Caco-2 (cell line): ENCODE measurements at regions of chr12 and their contacts with region 1.

Region 1: DNA sequence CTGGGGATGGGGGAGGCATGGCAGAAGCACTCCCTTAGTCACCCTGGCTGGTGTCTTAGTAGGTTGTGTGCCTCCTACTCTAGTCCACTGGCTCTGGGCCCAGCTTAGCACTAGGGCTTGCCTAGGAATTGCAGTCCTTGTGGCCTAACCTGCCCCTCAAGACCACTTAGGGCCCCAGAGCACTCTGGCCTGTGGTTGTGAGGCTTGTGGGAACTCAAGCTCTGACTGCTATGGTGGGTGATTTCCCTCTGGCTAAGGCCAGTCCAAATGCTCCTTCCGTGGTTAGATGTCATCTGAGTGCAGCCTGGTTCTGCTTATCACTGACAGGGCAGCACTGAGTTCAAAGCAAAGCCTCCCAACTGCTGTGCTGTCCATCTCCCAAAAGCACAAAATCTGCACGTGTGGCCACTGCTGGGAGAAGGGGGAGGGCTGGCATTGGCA is 20.2 kb downstream of the FGD4 start:
- DNase-seq: no peak
- H3K4me3 ChIP-seq: no peak overlapping the region
- H3K4me3 Mint-ChIP-seq: no peak overlapping the region
- H3K27ac Mint-ChIP-seq: peak overlapping the region; percentile 58
- H3K4me1 ChIP-seq: peaks cover 15% of the 10 kb centered on the region; the same call in 1 of the 2 replicates
- H3K4me1 Mint-ChIP-seq: peaks cover 27% of the 10 kb centered on the region
- H3K27me3 ChIP-seq: no peaks in the 10 kb centered on the region
- H3K27me3 Mint-ChIP-seq: no peaks in the 10 kb centered on the region
- CTCF ChIP-seq: no peak

Region 2: DNA sequence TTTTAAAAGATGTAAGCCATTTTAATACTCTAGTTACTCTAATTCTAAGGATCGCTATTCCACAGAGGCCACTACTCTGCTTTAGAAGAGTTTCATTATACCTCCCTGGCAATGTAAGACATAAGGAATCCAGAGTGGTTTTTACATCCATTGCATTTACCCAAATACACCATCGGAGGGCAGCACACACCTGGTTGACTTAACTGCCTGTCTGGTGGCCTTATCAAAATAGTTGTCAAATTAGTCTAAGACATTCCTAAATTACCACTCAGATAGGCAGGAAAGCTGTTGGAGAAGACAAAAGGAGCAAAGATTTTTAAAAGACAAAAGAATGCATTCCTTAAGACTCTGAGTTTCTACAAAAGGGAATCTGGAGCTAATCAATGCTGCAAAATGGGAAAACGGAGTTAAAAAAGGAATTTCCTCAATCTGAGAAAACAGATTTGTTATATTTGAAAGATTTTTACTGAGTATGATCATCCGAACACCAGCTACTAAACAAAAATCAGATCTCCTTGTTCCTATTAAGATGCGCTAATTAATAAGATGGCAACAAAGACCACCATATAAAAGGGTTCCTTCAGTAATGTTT is 54.0 kb before region 1 on chr12:
- CTCF ChIA-PET with region 1: no interaction called
- POLR2A ChIA-PET with region 1: no interaction called
- intact Hi-C with region 1: no loop called
- DNase-seq: peak; percentile 75 to 79
- H3K4me3 ChIP-seq: no peak overlapping the region
- H3K4me3 Mint-ChIP-seq: no peak overlapping the region
- H3K27ac Mint-ChIP-seq: no peak overlapping the region
- H3K4me1 ChIP-seq: peaks cover 13% of the 10 kb centered on the region
- H3K4me1 Mint-ChIP-seq: peaks cover 15% of the 10 kb centered on the region
- H3K27me3 ChIP-seq: no peaks in the 10 kb centered on the region
- H3K27me3 Mint-ChIP-seq: no peaks in the 10 kb centered on the region
- CTCF ChIP-seq: peak; percentile 82 to 98

Region 3: DNA sequence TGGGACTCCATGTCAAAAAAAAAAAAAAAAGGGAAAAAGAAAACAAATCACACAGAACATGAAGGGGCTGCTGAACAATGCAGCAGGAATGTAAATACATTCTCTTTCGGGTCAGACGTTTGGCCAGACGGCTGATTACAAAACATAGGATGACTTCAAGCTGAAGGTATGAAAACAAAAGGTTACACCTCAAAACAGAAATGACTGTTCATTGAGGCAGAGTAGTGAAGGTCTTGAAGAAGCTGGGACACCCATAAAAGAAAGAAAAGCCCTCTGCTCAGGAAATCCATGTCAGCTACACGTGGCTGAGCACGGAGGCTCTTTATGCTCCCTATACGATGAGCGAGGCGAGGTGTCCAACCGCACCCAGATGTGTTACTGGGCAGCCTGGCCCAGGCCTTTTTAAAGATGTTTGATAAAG is 17.6 kb after region 1 on chr12:
- CTCF ChIA-PET with region 1: no interaction called
- POLR2A ChIA-PET with region 1: interaction called, 10 read pairs
- intact Hi-C with region 1: no loop called
- DNase-seq: peak; percentile 79 to 82
- H3K4me3 ChIP-seq: no peak overlapping the region
- H3K4me3 Mint-ChIP-seq: peak overlapping the region; percentile 41
- H3K27ac Mint-ChIP-seq: peak overlapping the region; percentile 84
- H3K4me1 ChIP-seq: peaks cover 27% of the 10 kb centered on the region
- H3K4me1 Mint-ChIP-seq: peaks cover 49% of the 10 kb centered on the region
- H3K27me3 ChIP-seq: no peaks in the 10 kb centered on the region
- H3K27me3 Mint-ChIP-seq: no peaks in the 10 kb centered on the region
- CTCF ChIP-seq: no peak